Activated T-helper 1 cell treated with anti-CD3 and anti-CD28 coated beads, Interleukin-12 subunit alpha, Interleukin-12 subunit beta, Interleukin-2, Interleukin-4 antibody, amounts not matched to agents 30 ng/mL and 10 ng/mL and 1 ng/mL, durations not matched to agents 14 hours and 24 hours and 36 hours (primary cell): ENCODE measurements at regions of chr3 and their contacts with region 1.

Region 1: GRCh38 chr3:24680214-24680967 is 185.7 kb upstream of the THRB start:
- DNase-seq: no peak
- H3K4me3 Mint-ChIP-seq: no peak overlapping the region
- H3K27ac Mint-ChIP-seq: no peak overlapping the region
- H3K4me1 Mint-ChIP-seq: peaks cover 22% of the 10 kb centered on the region
- H3K27me3 Mint-ChIP-seq: peaks cover 52% of the 10 kb centered on the region

Region 2: DNA sequence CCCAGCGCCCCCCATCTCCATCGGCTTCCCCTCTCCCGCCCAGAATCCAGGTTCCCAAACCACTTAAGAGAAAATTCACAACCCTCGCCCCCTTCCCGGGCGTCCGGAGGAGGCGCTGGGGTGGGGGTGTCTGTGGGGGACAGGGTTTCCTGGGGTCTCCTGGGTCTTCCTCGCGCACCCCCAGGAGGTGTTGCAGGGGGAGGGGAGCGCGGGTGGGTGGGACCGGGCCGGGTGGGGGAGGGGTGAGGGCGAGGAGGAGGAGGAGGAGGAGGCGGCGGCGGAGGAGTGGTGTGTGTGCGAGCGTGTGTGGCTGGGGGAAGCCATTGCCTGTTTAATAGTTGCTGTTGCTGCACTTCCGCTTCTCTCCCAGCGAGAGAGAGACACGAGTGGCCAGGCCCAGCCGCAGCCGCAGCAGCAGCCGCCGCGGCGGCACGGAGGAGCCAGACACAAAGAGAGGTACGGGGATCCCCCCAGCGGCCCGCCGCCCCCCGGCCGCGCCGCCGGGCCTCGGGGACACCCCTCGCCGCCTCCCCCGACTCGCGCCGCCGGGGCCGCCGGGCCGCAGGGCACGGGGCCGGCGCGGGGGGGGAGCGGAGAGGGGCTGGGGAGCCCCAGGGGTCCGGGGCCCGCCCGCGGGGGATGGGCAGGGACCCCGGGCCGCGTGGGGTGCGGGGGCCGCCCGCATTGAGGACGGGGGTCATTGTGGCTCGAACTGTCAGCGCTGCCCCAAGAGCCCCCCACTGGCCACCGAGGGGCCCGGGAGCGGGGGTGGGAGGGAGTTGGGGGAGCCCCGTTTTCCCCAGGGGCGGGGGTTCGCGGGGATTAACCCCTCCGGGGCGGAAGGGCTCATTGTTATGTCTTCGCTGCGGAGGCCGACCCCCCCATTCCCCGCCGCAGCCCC is 874.5 kb before region 1 on chr3 and contains the start of gene UBE2E1:
- intact Hi-C with region 1: loop called (anchors 5 kb)
- DNase-seq: peak; percentile 53
- H3K4me3 Mint-ChIP-seq: peak within 1 kb of the TSS; percentile 95
- H3K27ac Mint-ChIP-seq: peak within 1 kb of the TSS; percentile 96
- H3K4me1 Mint-ChIP-seq: peaks cover 49% of the 10 kb centered on the region
- H3K27me3 Mint-ChIP-seq: peaks cover 33% of the 10 kb centered on the region
- total RNA-seq, gene UBE2E1: 78.8 and 87.0 TPM in 2 replicates

Region 3: GRCh38 chr3:24154013-24154695 is 526.2 kb before region 1 on chr3:
- intact Hi-C with region 1: loop called (anchors 10 kb)
- DNase-seq: no peak
- H3K4me3 Mint-ChIP-seq: no peak overlapping the region
- H3K27ac Mint-ChIP-seq: peak overlapping the region; percentile 57
- H3K4me1 Mint-ChIP-seq: peaks cover 44% of the 10 kb centered on the region
- H3K27me3 Mint-ChIP-seq: no peaks in the 10 kb centered on the region

Region 4: DNA sequence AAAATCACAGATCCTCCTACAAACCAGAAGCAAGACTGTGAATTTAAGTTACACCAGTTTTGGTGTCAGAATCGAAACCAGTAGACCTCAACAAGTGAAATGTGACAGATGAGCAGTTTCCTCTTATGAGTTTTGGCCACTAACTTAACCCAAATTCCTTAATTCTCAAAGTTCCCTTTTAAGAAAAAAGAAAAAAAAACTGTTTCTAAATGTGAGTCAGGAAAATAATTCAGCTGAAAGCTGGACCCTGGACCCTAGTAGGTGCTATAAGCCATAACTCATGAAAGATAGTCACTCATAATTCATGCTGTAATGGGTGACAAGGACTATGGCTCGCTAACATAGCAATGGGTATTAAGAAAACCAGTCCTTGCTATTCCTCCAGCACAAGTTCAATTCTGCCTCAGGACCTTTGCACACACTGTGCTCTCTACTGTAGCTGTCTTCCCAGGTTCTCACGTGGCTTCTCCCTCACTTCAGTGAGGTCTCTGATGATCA is 176.7 kb before region 1 on chr3:
- intact Hi-C with region 1: loop called (anchors 10 kb)
- DNase-seq: no peak
- H3K4me3 Mint-ChIP-seq: no peak overlapping the region
- H3K27ac Mint-ChIP-seq: no peak overlapping the region
- H3K4me1 Mint-ChIP-seq: no peaks in the 10 kb centered on the region
- H3K27me3 Mint-ChIP-seq: no peaks in the 10 kb centered on the region

Region 5: DNA sequence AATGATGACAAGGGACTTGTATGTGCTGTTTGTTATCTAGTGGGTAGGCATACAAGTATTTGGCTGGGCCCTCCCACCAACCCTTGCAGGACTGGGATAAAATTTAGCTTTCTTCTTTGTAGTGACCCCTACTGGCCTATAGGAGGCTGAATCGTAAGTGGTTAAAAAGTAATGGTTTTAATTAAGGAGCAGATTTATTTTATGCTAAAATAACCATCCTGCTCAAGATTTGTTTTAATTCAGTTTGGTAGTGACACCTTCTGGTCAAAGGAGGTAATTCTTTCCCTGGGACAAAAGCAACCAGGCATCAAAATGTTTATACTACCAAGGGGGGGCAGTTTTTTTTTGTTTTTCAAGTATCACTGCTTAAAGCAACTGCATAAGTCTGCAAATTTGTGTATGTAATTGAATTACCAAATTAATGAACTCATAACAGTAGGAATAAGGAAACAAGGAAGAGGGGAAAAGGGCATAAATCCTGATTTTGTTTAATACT is 913.7 kb after region 1 on chr3:
- intact Hi-C with region 1: loop called (anchors 5 kb)
- DNase-seq: no peak
- H3K4me3 Mint-ChIP-seq: no peak overlapping the region
- H3K27ac Mint-ChIP-seq: no peak overlapping the region
- H3K4me1 Mint-ChIP-seq: no peaks in the 10 kb centered on the region
- H3K27me3 Mint-ChIP-seq: no peaks in the 10 kb centered on the region